ENCODE measurements at regions of chr4 and their contacts with region 1.

Region 1: DNA sequence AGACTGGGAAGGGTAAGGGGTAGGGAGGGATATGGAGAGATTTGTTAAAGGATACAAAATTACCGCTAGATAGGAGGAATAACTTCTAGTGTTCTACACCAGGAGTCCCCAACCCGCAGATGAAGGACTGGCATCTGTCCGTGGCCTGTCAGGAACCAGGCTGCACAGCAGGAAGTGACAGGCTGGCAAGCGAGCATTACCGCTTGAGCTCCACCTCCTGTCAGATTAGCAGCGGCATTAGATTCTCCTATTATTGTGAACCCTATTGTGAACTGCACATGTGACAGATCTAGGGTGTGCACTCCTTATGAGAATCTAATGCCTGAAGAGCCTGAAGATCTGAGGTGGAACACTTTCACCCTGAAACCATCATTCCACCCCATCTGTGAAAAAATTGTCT is 27.9 kb upstream of the BBS7 start:
- DNase-seq: no peak
- ATAC-seq: no peak

Region 2: GRCh38 chr4:123573866-123574508 is 1675.8 kb after region 1 on chr4:
- intact Hi-C with region 1: loop called (anchors 10 kb)
- DNase-seq: no peak
- ATAC-seq: no peak